HAP-1 (cell line): ENCODE measurements at regions of chr21 and their contacts with region 1.

Region 1: GRCh38 chr21:17387030-17387617 is 125.7 kb upstream of the CXADR start:
- DNase-seq: peak; percentile 43 to 66
- H3K4me3 ChIP-seq: no peak overlapping the region
- H3K4me1 ChIP-seq: no peaks in the 10 kb centered on the region
- H3K27me3 ChIP-seq: peaks cover 2% of the 10 kb centered on the region; the same call in 1 of the 2 replicates

Region 2: DNA sequence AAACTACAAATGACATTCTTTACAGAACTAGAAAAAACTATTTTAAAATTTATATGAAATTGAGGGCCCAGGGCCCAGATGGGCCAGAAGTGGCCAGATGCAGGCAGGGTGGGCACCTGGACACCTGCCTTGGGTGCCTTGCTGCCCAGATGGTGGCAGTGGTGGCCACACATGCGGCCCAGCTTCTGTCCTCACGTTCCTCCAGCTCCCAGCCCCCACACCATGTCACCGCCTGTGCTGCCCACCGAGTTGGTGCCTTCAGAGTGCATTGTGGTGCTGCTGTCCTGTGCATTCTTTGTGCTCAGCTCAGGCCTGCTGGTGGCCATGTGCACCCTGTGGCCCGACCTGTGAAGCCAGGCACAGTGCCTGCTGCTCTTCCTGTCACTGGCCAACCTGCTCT is 91.1 kb before region 1 on chr21:
- in situ Hi-C with region 1: no loop called
- DNase-seq: no peak
- H3K4me3 ChIP-seq: no peak overlapping the region
- H3K4me1 ChIP-seq: no peaks in the 10 kb centered on the region
- H3K27me3 ChIP-seq: no peaks in the 10 kb centered on the region

Region 3: GRCh38 chr21:17585875-17586450 is 198.8 kb after region 1 on chr21:
- in situ Hi-C with region 1: loop called (anchors 10 kb)
- DNase-seq: peak; percentile 38 to 65
- H3K4me3 ChIP-seq: no peak overlapping the region
- H3K4me1 ChIP-seq: no peaks in the 10 kb centered on the region
- H3K27me3 ChIP-seq: no peaks in the 10 kb centered on the region